IMR-90 (cell line): ENCODE measurements at regions of chr10 and their contacts with region 1.

Region 1: DNA sequence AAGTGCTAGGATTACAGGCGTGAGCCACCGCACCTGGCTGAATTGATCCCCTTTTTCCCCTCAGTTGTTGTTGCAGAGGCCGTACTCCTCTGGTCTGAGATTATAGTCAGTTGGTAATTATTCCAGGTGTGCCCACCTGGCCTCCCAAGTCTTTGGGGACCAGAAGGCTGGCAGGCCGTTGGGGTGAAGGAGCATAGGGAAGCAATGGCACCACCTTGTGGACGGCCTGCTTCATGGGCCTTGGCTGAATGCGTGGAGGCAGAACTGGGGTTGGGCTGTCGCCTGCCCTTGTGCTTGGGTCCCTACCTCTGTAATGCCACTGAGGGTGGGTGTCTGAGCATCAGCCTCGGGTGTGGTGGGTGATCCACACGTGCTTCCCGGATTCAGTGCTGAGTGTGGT is 125.7 kb downstream of the RGS10 start:
- DNase-seq: peak; percentile 60
- ATAC-seq: no peak
- H3K4me3 ChIP-seq: no peak overlapping the region
- H3K27ac ChIP-seq: 0 out of 2 replicates have a peak overlapping the region, but pooled peaks have one; percentile 2
- H3K4me1 ChIP-seq: peaks cover 36% of the 10 kb centered on the region
- H3K27me3 ChIP-seq: no peaks in the 10 kb centered on the region
- CTCF ChIP-seq: peak; percentile 77
- POLR2A ChIP-seq: peak; percentile 49; the same call in 1 of the 2 replicates
- RAD21 ChIP-seq: peak; percentile 91

Region 2: DNA sequence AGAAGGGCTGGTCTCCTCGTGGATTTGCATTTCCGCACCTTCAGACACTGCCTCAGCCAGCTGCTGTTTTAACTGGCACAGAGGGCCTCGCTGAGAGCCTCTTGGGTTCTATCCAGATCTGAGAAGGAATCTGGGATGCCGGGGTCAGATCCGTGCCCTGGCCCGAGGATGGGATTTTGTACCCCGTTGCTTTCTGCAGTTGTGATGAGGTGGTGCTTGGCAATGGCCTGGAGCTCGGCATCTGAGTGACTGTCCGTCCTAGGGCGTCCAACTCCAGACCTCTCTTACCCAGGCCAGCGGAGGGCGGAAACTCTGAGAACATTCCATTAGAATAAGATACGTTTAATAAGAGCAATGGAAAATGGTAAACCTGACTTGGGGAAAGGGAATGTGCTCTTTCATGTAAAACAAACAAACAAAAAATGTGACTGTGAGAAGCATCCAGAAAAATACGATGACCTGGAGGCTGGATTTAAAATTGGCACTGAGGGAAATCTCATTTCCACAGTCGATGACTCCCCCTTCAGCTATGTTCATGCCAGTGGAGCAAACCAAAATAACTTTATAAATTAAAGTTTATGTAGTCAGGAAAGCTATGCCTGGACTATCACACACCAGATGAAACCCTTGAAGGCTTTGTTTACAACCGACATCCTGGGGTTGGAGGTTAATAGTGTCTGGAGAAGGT is 169.8 kb before region 1 on chr10:
- CTCF ChIA-PET with region 1: no interaction called
- POLR2A ChIA-PET with region 1: no interaction called
- dilution Hi-C with region 1: no loop called
- in situ Hi-C with region 1: no loop called
- intact Hi-C with region 1: loop called (anchors 2 kb)
- DNase-seq: peak; percentile 97
- ATAC-seq: peak; percentile 74
- H3K4me3 ChIP-seq: no peak overlapping the region
- H3K27ac ChIP-seq: peak overlapping the region; percentile 95
- H3K4me1 ChIP-seq: peaks cover 26% of the 10 kb centered on the region
- H3K27me3 ChIP-seq: no peaks in the 10 kb centered on the region
- CTCF ChIP-seq: 0 out of 2 replicates have a peak, but pooled peaks have one; percentile 16
- POLR2A ChIP-seq: peak; percentile 48; the same call in 1 of the 2 replicates
- RAD21 ChIP-seq: peak; percentile 12

Region 3: GRCh38 chr10:119270762-119271366 is 146.0 kb before region 1 on chr10:
- CTCF ChIA-PET with region 1: no interaction called
- POLR2A ChIA-PET with region 1: no interaction called
- dilution Hi-C with region 1: no loop called
- in situ Hi-C with region 1: no loop called
- intact Hi-C with region 1: loop called (anchors 5 kb)
- DNase-seq: peak; percentile 51
- ATAC-seq: peak; percentile 30
- H3K4me3 ChIP-seq: no peak overlapping the region
- H3K27ac ChIP-seq: peak overlapping the region; percentile 70
- H3K4me1 ChIP-seq: peaks cover 45% of the 10 kb centered on the region
- H3K27me3 ChIP-seq: no peaks in the 10 kb centered on the region
- CTCF ChIP-seq: no peak
- POLR2A ChIP-seq: peak; percentile 14; the same call in 1 of the 2 replicates
- RAD21 ChIP-seq: no peak

Region 4: DNA sequence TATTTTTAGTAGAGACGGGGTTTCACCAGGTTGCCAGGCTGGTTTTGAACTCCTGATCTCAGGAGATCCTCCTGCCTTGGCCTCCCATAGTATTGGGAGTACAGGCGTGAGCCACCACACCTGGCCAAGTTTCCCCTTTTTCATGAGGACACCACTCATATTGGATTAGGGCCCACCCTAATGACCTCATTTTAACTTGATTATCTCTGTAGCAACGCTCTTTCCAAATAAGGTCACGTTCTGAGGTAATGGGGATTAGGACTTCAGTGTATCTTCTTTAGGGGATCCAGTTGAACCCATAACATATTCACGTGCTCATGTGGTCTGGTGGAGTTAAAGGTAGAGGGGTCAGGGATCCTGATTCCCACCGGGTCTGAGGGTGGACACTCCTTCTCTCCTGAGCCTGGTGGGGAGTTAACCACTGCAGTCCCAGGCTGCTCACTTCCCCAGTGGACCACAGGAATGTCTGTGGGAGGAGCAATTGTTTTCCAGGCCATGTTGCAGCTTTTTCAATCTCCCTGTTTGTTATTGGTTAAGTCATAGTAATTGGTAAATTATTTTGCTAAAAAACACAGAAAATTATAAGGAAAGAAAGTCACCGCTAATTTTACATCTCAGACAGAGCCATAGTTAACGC is 78.9 kb before region 1 on chr10:
- CTCF ChIA-PET with region 1: no interaction called
- POLR2A ChIA-PET with region 1: no interaction called
- dilution Hi-C with region 1: no loop called
- in situ Hi-C with region 1: no loop called
- intact Hi-C with region 1: loop called (anchors 5 kb)
- DNase-seq: peak; percentile 74
- ATAC-seq: peak; percentile 77
- H3K4me3 ChIP-seq: no peak overlapping the region
- H3K27ac ChIP-seq: peak overlapping the region; percentile 34; the same call in 1 of the 2 replicates
- H3K4me1 ChIP-seq: peaks cover 42% of the 10 kb centered on the region
- H3K27me3 ChIP-seq: no peaks in the 10 kb centered on the region
- CTCF ChIP-seq: no peak
- POLR2A ChIP-seq: no peak
- RAD21 ChIP-seq: 0 out of 2 replicates have a peak, but pooled peaks have one; percentile 8

Region 5: DNA sequence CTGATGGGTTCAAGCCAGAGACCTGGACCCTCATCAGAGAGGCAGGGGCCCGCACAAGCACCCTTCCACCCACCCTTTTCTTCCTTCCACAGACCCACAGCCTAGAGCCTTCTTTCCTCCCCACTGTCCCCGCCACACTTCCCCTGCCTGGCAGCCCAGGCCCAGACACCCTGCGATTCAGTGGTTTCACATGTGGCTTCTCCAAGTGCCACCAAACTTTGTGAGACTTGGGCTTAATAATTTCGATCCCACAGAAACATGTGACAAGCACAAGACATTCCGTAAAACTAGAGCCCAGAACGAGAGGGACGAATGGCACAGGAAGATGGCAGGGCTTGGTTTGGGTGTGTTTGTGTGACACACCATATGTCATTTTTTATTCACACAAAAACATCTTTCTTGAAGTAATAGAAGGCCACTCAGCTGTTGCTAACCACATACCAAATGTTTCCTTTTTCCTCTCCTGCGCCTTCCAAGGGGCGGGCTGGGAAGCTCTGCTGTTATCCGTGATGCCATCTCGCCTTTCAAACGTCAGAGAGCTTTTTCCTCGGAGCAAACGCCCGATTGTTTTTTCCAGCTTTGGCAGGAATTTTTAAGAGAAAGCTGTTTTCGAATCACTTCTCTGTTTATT is 46.6 kb before region 1 on chr10:
- CTCF ChIA-PET with region 1: no interaction called
- POLR2A ChIA-PET with region 1: no interaction called
- dilution Hi-C with region 1: no loop called
- in situ Hi-C with region 1: no loop called
- intact Hi-C with region 1: loop called (anchors 2 kb)
- DNase-seq: peak; percentile 90
- ATAC-seq: peak; percentile 18
- H3K4me3 ChIP-seq: no peak overlapping the region
- H3K27ac ChIP-seq: peak overlapping the region; percentile 90
- H3K4me1 ChIP-seq: peaks cover 56% of the 10 kb centered on the region
- H3K27me3 ChIP-seq: no peaks in the 10 kb centered on the region
- CTCF ChIP-seq: no peak
- POLR2A ChIP-seq: no peak; the same call in 1 of the 2 replicates
- RAD21 ChIP-seq: no peak; the same call in 1 of the 2 replicates

Region 6: GRCh38 chr10:121205625-121206024 is 1788.8 kb after region 1 on chr10:
- CTCF ChIA-PET with region 1: no interaction called
- POLR2A ChIA-PET with region 1: no interaction called
- dilution Hi-C with region 1: no loop called
- in situ Hi-C with region 1: no loop called
- intact Hi-C with region 1: no loop called
- DNase-seq: no peak
- ATAC-seq: no peak
- H3K4me3 ChIP-seq: no peak overlapping the region
- H3K27ac ChIP-seq: no peak overlapping the region
- H3K4me1 ChIP-seq: no peaks in the 10 kb centered on the region
- H3K27me3 ChIP-seq: no peaks in the 10 kb centered on the region
- CTCF ChIP-seq: no peak
- POLR2A ChIP-seq: no peak
- RAD21 ChIP-seq: no peak